ENCODE measurements at regions of chr1 and their contacts with region 1.

Region 1: DNA sequence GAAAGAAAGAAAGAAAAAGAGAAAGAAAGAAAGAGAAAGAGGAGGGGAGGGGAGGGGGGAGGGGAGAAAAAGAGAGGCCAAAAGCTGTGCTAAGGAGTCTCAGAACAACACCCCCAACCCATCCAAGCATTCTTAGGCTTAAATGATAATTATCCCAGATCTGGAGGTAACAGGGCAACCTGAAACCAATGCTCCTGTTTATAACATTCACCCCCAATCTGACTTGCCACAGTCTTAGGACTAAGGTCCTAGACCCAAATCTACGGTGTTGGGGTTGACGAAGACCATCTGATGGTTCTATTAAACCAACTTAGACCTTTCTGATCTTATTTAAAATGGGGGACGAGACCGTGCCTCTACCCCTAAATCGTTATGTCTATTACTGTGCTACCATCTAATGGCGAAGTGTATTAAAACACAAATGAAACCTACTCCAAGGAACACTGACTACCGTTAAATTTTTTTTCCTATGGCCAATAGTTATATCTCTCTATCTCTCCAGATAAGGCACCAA is 119.3 kb upstream of the CDC42BPA start:
- DNase-seq: peak in 1 of 2 experiments; percentile 54
- H3K4me3 ChIP-seq: peak overlapping the region; percentile 49; the same call in 1 of the 2 replicates
- H3K27ac ChIP-seq: no peak overlapping the region
- H3K4me1 ChIP-seq: no peaks in the 10 kb centered on the region
- H3K27me3 ChIP-seq: no peaks in the 10 kb centered on the region
- CTCF ChIP-seq: peak; percentile 69

Region 2: GRCh38 chr1:226424228-226425003 is 1013.1 kb before region 1 on chr1:
- CTCF ChIA-PET with region 1: no interaction called
- POLR2A ChIA-PET with region 1: no interaction called
- intact Hi-C with region 1: loop called (anchors 10 kb)
- DNase-seq: peak in 1 of 2 experiments; percentile 47
- H3K4me3 ChIP-seq: no peak overlapping the region
- H3K27ac ChIP-seq: no peak overlapping the region
- H3K4me1 ChIP-seq: no peaks in the 10 kb centered on the region
- H3K27me3 ChIP-seq: no peaks in the 10 kb centered on the region; the same call in 1 of the 2 replicates
- CTCF ChIP-seq: peak; percentile 77

Region 3: GRCh38 chr1:226547754-226548191 is 889.8 kb before region 1 on chr1:
- CTCF ChIA-PET with region 1: no interaction called
- POLR2A ChIA-PET with region 1: no interaction called
- intact Hi-C with region 1: loop called (anchors 1 kb)
- DNase-seq: peak; percentile 67 to 82
- H3K4me3 ChIP-seq: no peak overlapping the region
- H3K27ac ChIP-seq: no peak overlapping the region
- H3K4me1 ChIP-seq: no peaks in the 10 kb centered on the region
- H3K27me3 ChIP-seq: peaks cover 8% of the 10 kb centered on the region; the same call in 1 of the 2 replicates
- CTCF ChIP-seq: peak; percentile 85

Region 4: GRCh38 chr1:226634166-226634588 is 803.4 kb before region 1 on chr1:
- CTCF ChIA-PET with region 1: no interaction called
- POLR2A ChIA-PET with region 1: no interaction called
- intact Hi-C with region 1: loop called (anchors 2 kb)
- DNase-seq: peak in 1 of 2 experiments; percentile 75
- H3K4me3 ChIP-seq: no peak overlapping the region
- H3K27ac ChIP-seq: no peak overlapping the region
- H3K4me1 ChIP-seq: peaks cover 22% of the 10 kb centered on the region
- H3K27me3 ChIP-seq: no peaks in the 10 kb centered on the region
- CTCF ChIP-seq: peak; percentile 96

Region 5: DNA sequence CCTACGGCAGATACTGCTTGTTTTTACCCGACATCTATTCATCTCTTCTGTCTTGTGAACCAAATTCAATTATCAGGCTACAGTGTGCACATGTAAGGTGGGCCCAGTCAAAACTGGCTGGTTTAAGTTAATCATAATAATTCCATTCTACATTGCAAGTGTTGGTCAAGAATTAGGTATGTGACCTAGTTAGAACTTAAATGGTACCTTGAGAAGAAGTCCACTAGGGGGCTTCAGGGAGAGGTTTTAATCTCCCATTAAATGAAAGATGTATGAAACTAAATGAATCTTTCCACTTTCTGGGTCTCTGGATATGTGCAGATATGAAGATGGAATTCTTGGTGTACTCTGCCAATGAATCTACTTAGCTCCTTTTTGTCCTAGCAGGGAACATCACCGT is 306.4 kb before region 1 on chr1:
- CTCF ChIA-PET with region 1: no interaction called
- POLR2A ChIA-PET with region 1: no interaction called
- intact Hi-C with region 1: loop called (anchors 2 kb)
- DNase-seq: no peak
- H3K4me3 ChIP-seq: no peak overlapping the region
- H3K27ac ChIP-seq: no peak overlapping the region
- H3K4me1 ChIP-seq: no peaks in the 10 kb centered on the region
- H3K27me3 ChIP-seq: no peaks in the 10 kb centered on the region
- CTCF ChIP-seq: peak; percentile 69

Region 6: DNA sequence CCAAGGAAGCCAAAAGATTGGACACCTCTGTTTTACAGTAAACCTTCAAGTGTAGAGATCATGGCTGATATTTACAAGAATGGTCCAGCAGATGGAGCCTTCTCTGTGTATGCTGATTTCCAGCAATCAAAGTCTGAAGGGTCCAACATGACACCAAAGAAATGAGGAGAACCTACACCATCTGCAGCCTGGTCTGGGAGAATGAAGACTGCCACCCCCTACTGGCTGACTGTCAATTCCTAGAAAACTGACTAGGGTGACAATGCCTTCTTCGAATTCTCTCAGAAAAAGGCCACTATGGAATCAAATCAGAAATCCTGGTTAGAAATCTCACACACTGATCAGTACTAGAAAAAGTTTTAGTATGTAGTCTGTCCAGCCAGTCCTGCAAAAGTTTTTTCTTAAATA is 202.6 kb before region 1 on chr1:
- CTCF ChIA-PET with region 1: interaction called, 9 read pairs
- POLR2A ChIA-PET with region 1: no interaction called
- intact Hi-C with region 1: loop called (anchors 1 kb)
- DNase-seq: peak; percentile 19 to 58
- H3K4me3 ChIP-seq: no peak overlapping the region
- H3K27ac ChIP-seq: no peak overlapping the region
- H3K4me1 ChIP-seq: no peaks in the 10 kb centered on the region
- H3K27me3 ChIP-seq: no peaks in the 10 kb centered on the region
- CTCF ChIP-seq: peak; percentile 51